ENCODE measurements at regions of chr6 and their contacts with region 1.

Region 1: DNA sequence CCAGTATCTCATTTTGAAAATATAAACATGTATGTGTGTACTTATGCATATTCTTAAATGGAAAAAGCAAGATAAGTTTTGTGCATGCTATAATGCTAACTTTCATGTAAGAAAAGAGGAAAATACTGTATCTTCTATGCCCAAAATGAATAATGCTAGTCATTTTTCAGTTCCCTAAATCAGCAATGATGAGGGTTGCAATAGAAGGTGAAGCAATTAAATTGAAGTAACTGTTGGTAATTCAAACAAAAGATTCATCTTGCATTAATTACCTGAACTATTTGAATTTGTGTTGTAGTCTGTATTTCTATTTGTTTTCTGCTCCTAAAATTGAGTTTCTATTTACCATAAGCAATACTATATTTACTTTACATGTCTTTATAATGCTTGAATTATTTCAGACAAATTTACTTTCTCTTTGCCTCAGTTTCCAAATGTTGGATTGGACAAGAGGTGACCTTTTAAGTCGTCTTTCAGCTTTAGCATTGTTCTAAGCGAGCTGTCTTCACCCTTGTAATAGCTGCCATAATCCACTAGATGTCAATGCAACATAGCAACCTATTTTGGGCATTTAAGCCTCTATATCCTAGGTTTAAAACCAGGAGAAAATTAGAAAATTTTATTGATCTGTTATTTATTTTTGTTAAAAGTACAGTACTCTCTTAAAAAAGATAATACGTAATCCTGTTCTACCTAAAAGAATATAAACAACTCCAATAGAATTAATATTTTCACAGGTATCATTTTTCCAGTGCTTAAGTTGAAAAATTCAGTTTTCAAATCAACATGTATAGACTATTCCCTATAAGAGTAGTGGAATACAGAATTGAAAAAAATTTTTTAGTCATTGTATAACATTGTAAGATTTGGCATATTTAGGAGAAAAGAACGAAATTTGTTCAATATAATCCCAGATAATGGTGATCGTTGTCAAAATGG is 52.3 kb upstream of the IFNGR1 start:
- DNase-seq: peak; percentile 72
- H3K4me3 ChIP-seq: no peak overlapping the region
- H3K27ac ChIP-seq: no peak overlapping the region
- H3K4me1 ChIP-seq: no peaks in the 10 kb centered on the region
- H3K27me3 ChIP-seq: peaks cover 3 to 8% of the 10 kb centered on the region in 2 experiments
- CTCF ChIP-seq: peak; percentile 57 to 69
- POLR2A ChIP-seq: no peak

Region 2: GRCh38 chr6:136365776-136366354 is 905.6 kb before region 1 on chr6:
- CTCF ChIA-PET with region 1: no interaction called
- POLR2A ChIA-PET with region 1: no interaction called
- dilution Hi-C with region 1: no loop called
- intact Hi-C with region 1: no loop called
- DNase-seq: no peak
- H3K4me3 ChIP-seq: no peak overlapping the region
- H3K27ac ChIP-seq: no peak overlapping the region
- H3K4me1 ChIP-seq: no peaks in the 10 kb centered on the region
- H3K27me3 ChIP-seq: peaks cover 0 to 7% of the 10 kb centered on the region in 2 experiments
- CTCF ChIP-seq: no peak
- POLR2A ChIP-seq: no peak

Region 3: GRCh38 chr6:137136065-137136464 is 135.4 kb before region 1 on chr6:
- CTCF ChIA-PET with region 1: interaction called, 4 read pairs
- POLR2A ChIA-PET with region 1: no interaction called
- dilution Hi-C with region 1: no loop called
- intact Hi-C with region 1: loop called (anchors 5 kb)
- DNase-seq: peak; percentile 48
- H3K4me3 ChIP-seq: no peak overlapping the region
- H3K27ac ChIP-seq: no peak overlapping the region
- H3K4me1 ChIP-seq: no peaks in the 10 kb centered on the region
- H3K27me3 ChIP-seq: peaks cover 0 to 3% of the 10 kb centered on the region in 2 experiments
- CTCF ChIP-seq: peak in 1 of 2 donors; percentile 16
- POLR2A ChIP-seq: no peak

Region 4: GRCh38 chr6:137370871-137371633 is 99.5 kb after region 1 on chr6:
- CTCF ChIA-PET with region 1: interaction called, 3 read pairs
- POLR2A ChIA-PET with region 1: no interaction called
- dilution Hi-C with region 1: no loop called
- intact Hi-C with region 1: loop called (anchors 5 kb)
- DNase-seq: no peak
- H3K4me3 ChIP-seq: no peak overlapping the region
- H3K27ac ChIP-seq: no peak overlapping the region
- H3K4me1 ChIP-seq: no peaks in the 10 kb centered on the region
- H3K27me3 ChIP-seq: no peaks in the 10 kb centered on the region
- CTCF ChIP-seq: no peak
- POLR2A ChIP-seq: no peak

Region 5: DNA sequence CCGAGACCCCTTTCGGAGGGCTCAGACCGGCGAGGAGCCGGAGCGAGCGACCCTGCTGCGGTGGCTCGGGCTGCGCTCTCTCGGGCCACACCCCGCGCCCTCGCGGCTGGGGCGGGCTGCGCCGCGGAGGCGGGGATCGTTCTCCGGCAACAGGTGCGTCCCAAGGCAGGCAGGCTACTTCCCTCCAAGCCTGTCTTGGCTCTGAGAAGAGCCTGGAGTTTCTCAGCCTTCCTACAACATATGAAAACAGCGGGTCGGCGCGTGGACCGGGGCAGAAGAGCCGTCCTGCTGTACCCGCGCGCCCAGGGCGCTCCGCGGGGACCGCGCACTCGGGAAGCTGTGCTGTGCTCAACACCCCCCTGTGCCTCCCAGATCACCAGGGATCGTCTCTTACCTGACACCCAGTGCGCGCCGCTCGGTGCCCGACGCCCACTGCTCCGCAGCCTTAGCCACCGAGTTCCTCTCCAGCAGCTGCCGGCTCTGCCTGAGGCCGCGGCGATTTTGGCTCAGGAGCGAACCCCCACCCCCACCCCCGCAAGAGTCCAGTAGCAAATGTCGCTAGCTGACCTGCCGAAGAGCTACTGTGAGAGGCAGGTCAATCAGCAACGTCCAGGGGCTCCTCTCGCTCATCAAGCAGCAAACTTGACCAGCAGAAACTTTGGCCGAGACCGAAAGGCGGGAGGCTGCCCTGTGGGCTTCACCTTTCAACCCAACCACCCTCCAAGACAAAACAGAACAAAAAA is 226.4 kb after region 1 on chr6:
- CTCF ChIA-PET with region 1: no interaction called
- POLR2A ChIA-PET with region 1: no interaction called
- dilution Hi-C with region 1: no loop called
- intact Hi-C with region 1: loop called (anchors 10 kb)
- DNase-seq: no peak
- H3K4me3 ChIP-seq: no peak overlapping the region
- H3K27ac ChIP-seq: no peak overlapping the region
- H3K4me1 ChIP-seq: no peaks in the 10 kb centered on the region
- H3K27me3 ChIP-seq: peaks cover 62 to 95% of the 10 kb centered on the region in 2 experiments
- CTCF ChIP-seq: no peak
- POLR2A ChIP-seq: no peak

Region 6: GRCh38 chr6:138465007-138465645 is 1193.6 kb after region 1 on chr6:
- CTCF ChIA-PET with region 1: no interaction called
- POLR2A ChIA-PET with region 1: no interaction called
- dilution Hi-C with region 1: no loop called
- intact Hi-C with region 1: no loop called
- DNase-seq: peak; percentile 78
- H3K4me3 ChIP-seq: no peak overlapping the region
- H3K27ac ChIP-seq: peak overlapping the region; percentile 46
- H3K4me1 ChIP-seq: peaks cover 5% of the 10 kb centered on the region
- H3K27me3 ChIP-seq: no peaks in the 10 kb centered on the region
- CTCF ChIP-seq: no peak
- POLR2A ChIP-seq: no peak